Naive thymus-derived CD4-positive, alpha-beta T cell (primary cell): ENCODE measurements at regions of chr1 and their contacts with region 1.

Region 1: DNA sequence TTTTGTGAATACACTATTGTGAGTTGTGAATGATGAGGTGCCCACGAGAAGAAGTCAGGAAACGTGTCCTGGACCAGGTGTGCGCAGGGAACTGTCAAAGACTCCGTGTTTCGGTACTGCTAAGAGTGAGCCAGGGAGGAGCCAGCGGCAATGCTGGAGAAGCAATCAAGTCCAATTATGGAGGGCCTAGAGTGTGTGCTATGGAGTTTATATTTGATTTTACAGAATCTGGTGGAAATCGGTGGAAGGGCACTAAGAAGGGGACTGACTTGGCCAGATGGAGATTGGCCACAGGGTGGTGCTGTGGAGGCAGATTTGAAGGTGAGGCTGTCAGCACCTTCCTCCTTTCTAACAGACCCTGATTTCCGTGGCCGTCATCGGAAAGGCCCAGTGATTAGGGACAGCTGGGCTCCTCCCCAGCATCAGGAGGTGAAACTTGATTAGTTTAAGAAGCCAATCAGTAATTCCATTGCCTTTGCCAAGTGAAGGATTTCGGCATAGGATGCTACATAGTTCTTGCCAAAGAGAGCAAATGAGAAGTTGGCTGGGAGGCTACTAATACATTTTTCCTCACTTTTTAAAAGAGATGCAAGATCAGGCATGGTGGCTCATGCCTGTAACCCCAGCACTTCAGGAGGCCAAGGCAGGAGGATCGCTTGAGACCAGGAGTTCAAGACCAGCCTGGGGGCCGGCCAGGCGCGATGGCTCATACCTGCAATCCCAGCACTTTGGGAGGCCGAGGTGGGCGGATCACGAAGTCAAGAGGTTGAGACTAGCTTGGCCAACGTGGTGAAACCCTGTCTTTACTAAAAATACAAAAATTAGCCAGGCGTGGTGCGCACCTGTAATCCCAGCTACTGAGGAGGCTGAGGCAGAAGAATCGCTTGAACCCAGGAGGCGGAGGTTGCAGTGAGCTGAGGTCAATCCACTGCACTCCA is 7.0 kb downstream of the PTCH2 start:
- DNase-seq: peak; percentile 58 to 82 (median 75)
- ATAC-seq: peak; percentile 96
- H3K4me3 ChIP-seq: no peak overlapping the region
- H3K4me3 Mint-ChIP-seq: peak overlapping the region in 9 of 10 donors; percentile 3 to 73 (median 42)
- H3K27ac ChIP-seq: no peak overlapping the region
- H3K27ac Mint-ChIP-seq: peak overlapping the region in 8 of 9 donors; percentile 12 to 81 (median 41)
- H3K4me1 ChIP-seq: no peaks in the 10 kb centered on the region
- H3K4me1 Mint-ChIP-seq: peaks cover 7 to 19% (median 8%) of the 10 kb centered on the region in 7 donors
- H3K27me3 ChIP-seq: no peaks in the 10 kb centered on the region
- H3K27me3 Mint-ChIP-seq: peaks cover under 1 to 9% (median under 1%) of the 10 kb centered on the region in 5 donors

Region 2: GRCh38 chr1:44714944-44715571 is 120.9 kb before region 1 on chr1:
- CTCF ChIA-PET with region 1: interaction called, 5 read pairs
- POLR2A ChIA-PET with region 1: no interaction called
- intact Hi-C with region 1: loop called in 1 of 2 experiments (anchors 1 kb)
- DNase-seq: peak; percentile 46 to 77 (median 69)
- ATAC-seq: peak; percentile 98
- H3K4me3 ChIP-seq: peak overlapping the region; percentile 28
- H3K4me3 Mint-ChIP-seq: peak overlapping the region; percentile 24 to 72 (median 66)
- H3K27ac ChIP-seq: peak overlapping the region; percentile 39
- H3K27ac Mint-ChIP-seq: peak overlapping the region; percentile 40 to 85 (median 68)
- H3K4me1 ChIP-seq: peaks cover 11 to 37% of the 10 kb centered on the region in 2 donors
- H3K4me1 Mint-ChIP-seq: peaks cover 39 to 52% (median 47%) of the 10 kb centered on the region in 7 donors
- H3K27me3 ChIP-seq: no peaks in the 10 kb centered on the region
- H3K27me3 Mint-ChIP-seq: peaks cover 0 to 9% (median 0%) of the 10 kb centered on the region in 5 donors

Region 3: GRCh38 chr1:44792783-44793714 is 43.0 kb before region 1 on chr1:
- CTCF ChIA-PET with region 1: interaction called, 5 read pairs
- POLR2A ChIA-PET with region 1: interaction called, 709 read pairs
- intact Hi-C with region 1: loop called (anchors 2 kb)
- DNase-seq: no peak
- ATAC-seq: peak; percentile 3
- H3K4me3 ChIP-seq: no peak overlapping the region
- H3K4me3 Mint-ChIP-seq: no peak overlapping the region
- H3K27ac ChIP-seq: no peak overlapping the region
- H3K27ac Mint-ChIP-seq: peak overlapping the region in 2 of 9 donors; percentile 31 to 40
- H3K4me1 ChIP-seq: no peaks in the 10 kb centered on the region
- H3K4me1 Mint-ChIP-seq: peaks cover 0 to 5% (median 2%) of the 10 kb centered on the region in 7 donors
- H3K27me3 ChIP-seq: no peaks in the 10 kb centered on the region
- H3K27me3 Mint-ChIP-seq: no peaks in the 10 kb centered on the region

Region 4: GRCh38 chr1:44819608-44820327 is 16.2 kb before region 1 on chr1:
- CTCF ChIA-PET with region 1: interaction called, 5 read pairs
- POLR2A ChIA-PET with region 1: interaction called, 709 read pairs
- intact Hi-C with region 1: loop called (anchors 1 kb)
- DNase-seq: peak; percentile 75 to 91 (median 86)
- ATAC-seq: peak; percentile 86
- H3K4me3 ChIP-seq: peak overlapping the region; percentile 66
- H3K4me3 Mint-ChIP-seq: peak overlapping the region; percentile 91 to 96 (median 94)
- H3K27ac ChIP-seq: peak overlapping the region; percentile 92
- H3K27ac Mint-ChIP-seq: peak overlapping the region; percentile 99 to 100 (median 100)
- H3K4me1 ChIP-seq: peaks cover 0 to 21% of the 10 kb centered on the region in 2 donors
- H3K4me1 Mint-ChIP-seq: peaks cover 31 to 48% (median 45%) of the 10 kb centered on the region in 7 donors
- H3K27me3 ChIP-seq: no peaks in the 10 kb centered on the region
- H3K27me3 Mint-ChIP-seq: no peaks in the 10 kb centered on the region

Region 5: DNA sequence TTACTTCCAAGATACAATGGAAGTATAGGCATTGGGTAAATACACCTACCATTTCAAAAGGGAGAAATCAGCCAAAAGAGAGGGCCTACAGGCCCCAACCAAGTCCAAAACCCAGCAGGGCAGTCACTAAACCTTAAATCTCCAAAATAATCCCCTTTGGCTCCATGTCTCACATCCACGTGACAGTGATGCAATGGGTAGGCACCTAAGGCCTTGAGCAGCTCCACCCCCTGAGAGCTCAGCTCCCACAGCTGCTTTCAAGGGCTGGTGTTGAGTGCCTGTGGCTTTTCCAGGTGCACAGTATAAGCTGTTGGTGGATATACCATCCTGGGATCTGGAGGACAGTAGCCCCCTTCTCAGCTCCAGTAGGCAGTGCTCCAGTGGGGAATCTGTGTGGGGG is 248.6 kb after region 1 on chr1:
- CTCF ChIA-PET with region 1: no interaction called
- POLR2A ChIA-PET with region 1: no interaction called
- intact Hi-C with region 1: no loop called
- DNase-seq: no peak
- ATAC-seq: no peak
- H3K4me3 ChIP-seq: no peak overlapping the region
- H3K4me3 Mint-ChIP-seq: no peak overlapping the region
- H3K27ac ChIP-seq: no peak overlapping the region
- H3K27ac Mint-ChIP-seq: no peak overlapping the region
- H3K4me1 ChIP-seq: no peaks in the 10 kb centered on the region
- H3K4me1 Mint-ChIP-seq: peaks cover 0 to under 1% (median 0%) of the 10 kb centered on the region in 7 donors
- H3K27me3 ChIP-seq: no peaks in the 10 kb centered on the region
- H3K27me3 Mint-ChIP-seq: peaks cover 0 to 5% (median 0%) of the 10 kb centered on the region in 5 donors

Region 6: DNA sequence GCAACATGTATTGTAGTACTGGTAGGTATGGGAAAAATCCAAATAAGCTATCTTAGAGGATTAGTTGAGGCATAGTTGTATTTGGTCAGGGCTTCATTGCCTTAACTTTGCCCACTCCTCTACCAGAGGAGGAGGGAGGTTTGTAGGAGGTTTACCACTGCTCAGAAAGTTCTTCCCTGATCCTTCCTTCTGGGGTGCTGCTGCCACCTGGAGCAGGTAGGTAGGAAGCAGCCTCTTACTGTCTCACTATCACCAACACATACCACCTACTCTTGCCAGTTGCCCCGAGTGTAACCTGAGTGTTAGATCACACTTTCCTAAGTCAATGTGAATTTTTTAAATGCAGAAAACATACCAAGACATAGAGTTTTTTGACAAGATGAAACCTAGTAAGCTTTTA is 394.5 kb after region 1 on chr1:
- CTCF ChIA-PET with region 1: no interaction called
- POLR2A ChIA-PET with region 1: no interaction called
- intact Hi-C with region 1: loop called in 1 of 2 experiments (anchors 2 kb)
- DNase-seq: peak in 6 of 9 donors; percentile 5 to 49 (median 22)
- ATAC-seq: peak; percentile 49
- H3K4me3 ChIP-seq: no peak overlapping the region
- H3K4me3 Mint-ChIP-seq: no peak overlapping the region
- H3K27ac ChIP-seq: no peak overlapping the region
- H3K27ac Mint-ChIP-seq: peak overlapping the region in 1 of 9 donors; percentile 15
- H3K4me1 ChIP-seq: no peaks in the 10 kb centered on the region
- H3K4me1 Mint-ChIP-seq: no peaks in the 10 kb centered on the region
- H3K27me3 ChIP-seq: no peaks in the 10 kb centered on the region
- H3K27me3 Mint-ChIP-seq: peaks cover 0 to 4% (median 0%) of the 10 kb centered on the region in 5 donors